ENCODE measurements at regions of chr7 and their contacts with region 1.

Region 1: DNA sequence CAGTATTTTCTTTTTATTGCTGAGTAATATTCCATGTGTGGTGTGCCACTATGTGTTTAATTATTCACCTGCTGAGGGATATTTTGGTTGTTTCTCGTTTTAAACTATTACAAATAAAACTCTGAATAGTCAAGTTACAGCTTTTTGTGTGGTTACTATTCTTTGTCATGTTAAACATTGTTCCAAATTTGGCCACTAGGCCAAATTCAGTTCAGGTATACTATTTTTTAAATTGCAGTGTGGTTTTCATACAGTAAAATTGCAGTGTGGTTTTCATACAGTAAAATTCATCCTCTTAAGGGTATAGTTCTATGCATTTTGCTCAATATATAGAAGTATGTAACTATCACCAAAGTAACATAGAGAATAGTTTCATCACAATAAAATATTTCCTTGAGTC is 97.4 kb upstream of the FAM3C start:
- DNase-seq: no peak
- ATAC-seq: no peak
- H3K4me3 ChIP-seq: no peak overlapping the region
- H3K27ac ChIP-seq: no peak overlapping the region
- H3K4me1 ChIP-seq: no peaks in the 10 kb centered on the region
- H3K27me3 ChIP-seq: no peaks in the 10 kb centered on the region
- CTCF ChIP-seq: no peak
- EP300 ChIP-seq: no peak
- POLR2A ChIP-seq: no peak
- RAD21 ChIP-seq: no peak

Region 2: DNA sequence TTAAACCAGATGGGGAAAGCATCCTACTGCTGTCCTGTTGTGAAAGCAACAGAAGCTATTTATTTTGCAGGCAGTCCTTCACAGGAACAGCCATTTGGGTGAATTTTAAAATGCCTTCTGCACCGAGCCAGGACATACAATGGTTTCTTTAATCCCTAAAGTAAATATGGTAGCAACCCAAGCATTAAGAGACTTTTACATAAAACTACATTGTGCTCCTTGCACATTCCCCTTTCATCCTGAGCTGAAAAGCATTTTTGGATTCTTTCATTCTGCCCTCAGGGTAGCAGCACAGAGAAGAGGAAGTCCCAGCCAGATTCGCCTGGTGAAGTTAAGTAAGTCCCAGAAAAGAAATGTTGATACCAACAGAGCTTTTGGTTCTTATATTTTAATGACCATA is 13.5 kb before region 1 on chr7:
- CTCF ChIA-PET with region 1: interaction called, 7 read pairs
- POLR2A ChIA-PET with region 1: interaction called, 4 read pairs
- RAD21 ChIA-PET with region 1: no interaction called
- SMC1A ChIA-PET with region 1: interaction called, 11 read pairs
- in situ Hi-C with region 1: no loop called
- intact Hi-C with region 1: no loop called
- DNase-seq: no peak
- ATAC-seq: peak; percentile 40; the same call in 1 of the 3 replicates
- H3K4me3 ChIP-seq: no peak overlapping the region
- H3K27ac ChIP-seq: no peak overlapping the region
- H3K4me1 ChIP-seq: no peaks in the 10 kb centered on the region
- H3K27me3 ChIP-seq: no peaks in the 10 kb centered on the region
- CTCF ChIP-seq: no peak
- EP300 ChIP-seq: no peak
- POLR2A ChIP-seq: no peak
- RAD21 ChIP-seq: no peak

Region 3: GRCh38 chr7:121558288-121558687 is 64.7 kb after region 1 on chr7:
- CTCF ChIA-PET with region 1: no interaction called
- POLR2A ChIA-PET with region 1: no interaction called
- RAD21 ChIA-PET with region 1: no interaction called
- SMC1A ChIA-PET with region 1: no interaction called
- in situ Hi-C with region 1: no loop called
- intact Hi-C with region 1: no loop called
- DNase-seq: no peak
- ATAC-seq: no peak
- H3K4me3 ChIP-seq: no peak overlapping the region
- H3K27ac ChIP-seq: no peak overlapping the region
- H3K4me1 ChIP-seq: no peaks in the 10 kb centered on the region
- H3K27me3 ChIP-seq: peaks cover 0 to 2% of the 10 kb centered on the region in 2 experiments; a peak in 1 of 4 replicates
- CTCF ChIP-seq: no peak
- EP300 ChIP-seq: no peak
- POLR2A ChIP-seq: no peak
- RAD21 ChIP-seq: no peak

Region 4: DNA sequence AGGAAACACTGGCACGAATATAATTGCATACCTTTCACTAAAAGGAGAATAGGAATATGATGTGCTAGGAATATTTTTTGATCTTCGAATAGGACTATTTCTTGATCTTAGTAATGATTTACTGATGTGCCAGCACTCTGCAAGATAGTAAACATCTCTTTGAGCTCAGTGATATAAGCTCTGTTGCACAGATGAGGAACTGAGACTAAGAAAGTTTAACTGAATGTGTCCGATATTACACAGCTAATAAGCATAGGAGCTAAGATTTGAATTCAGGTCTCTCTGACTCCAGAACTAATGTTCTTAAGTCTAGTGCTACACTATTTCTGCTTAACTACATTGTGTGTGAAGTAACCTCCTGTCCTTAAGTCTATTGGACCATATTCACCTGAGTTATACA is 281.0 kb after region 1 on chr7:
- CTCF ChIA-PET with region 1: no interaction called
- POLR2A ChIA-PET with region 1: no interaction called
- RAD21 ChIA-PET with region 1: no interaction called
- SMC1A ChIA-PET with region 1: no interaction called
- in situ Hi-C with region 1: no loop called
- intact Hi-C with region 1: no loop called
- DNase-seq: no peak
- ATAC-seq: peak; percentile 57
- H3K4me3 ChIP-seq: no peak overlapping the region
- H3K27ac ChIP-seq: no peak overlapping the region
- H3K4me1 ChIP-seq: no peaks in the 10 kb centered on the region
- H3K27me3 ChIP-seq: no peaks in the 10 kb centered on the region
- CTCF ChIP-seq: no peak
- EP300 ChIP-seq: no peak
- POLR2A ChIP-seq: no peak
- RAD21 ChIP-seq: no peak

Measured in GM12878 (cell line).